Endothelial cell of umbilical vein (primary cell): ENCODE measurements at regions of chr22 and their contacts with region 1.

Region 1: DNA sequence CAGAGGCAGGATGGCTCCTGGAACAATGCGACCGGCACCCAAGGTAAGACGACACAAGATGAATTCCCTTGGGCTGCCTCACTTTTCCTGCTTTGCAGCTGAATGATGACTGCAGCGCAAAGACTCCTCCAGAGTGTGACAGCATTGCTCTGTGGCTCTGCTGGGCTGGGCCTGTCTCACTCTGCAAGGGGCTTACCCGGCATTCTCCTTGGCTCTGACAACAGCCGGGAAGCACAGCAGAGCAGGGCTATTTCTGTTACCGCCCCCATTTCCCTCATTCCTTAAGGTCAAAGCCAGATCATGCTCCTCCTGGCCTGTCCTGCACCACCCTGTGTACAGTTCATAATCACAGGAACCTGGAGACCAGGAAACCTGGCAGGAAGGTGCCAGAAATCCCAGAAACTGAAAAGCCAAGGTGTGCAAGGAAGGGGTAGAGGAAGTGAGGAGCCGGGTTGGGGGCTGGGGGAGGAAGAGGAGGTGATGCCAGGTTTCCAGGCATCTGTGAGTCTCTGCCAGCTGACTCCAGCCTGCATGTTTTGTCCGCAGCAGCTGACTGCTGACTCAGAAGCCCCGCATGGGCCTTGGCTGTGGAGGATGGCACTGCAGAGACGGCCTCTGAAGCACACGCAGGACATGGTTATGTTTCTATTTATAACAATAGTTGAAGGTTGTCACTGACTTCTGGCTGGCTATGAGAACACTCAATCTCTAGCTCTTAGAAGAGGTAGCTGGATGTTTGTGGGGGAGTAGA is 113.6 kb downstream of the MICAL3 start:
- DNase-seq: peak; percentile 94
- H3K4me3 ChIP-seq: no peak overlapping the region
- H3K27ac ChIP-seq: peak overlapping the region; percentile 69
- H3K4me1 ChIP-seq: peaks cover 20% of the 10 kb centered on the region
- H3K27me3 ChIP-seq: no peaks in the 10 kb centered on the region
- CTCF ChIP-seq: peak; percentile 13 to 40
- POLR2A ChIP-seq: no peak

Region 2: DNA sequence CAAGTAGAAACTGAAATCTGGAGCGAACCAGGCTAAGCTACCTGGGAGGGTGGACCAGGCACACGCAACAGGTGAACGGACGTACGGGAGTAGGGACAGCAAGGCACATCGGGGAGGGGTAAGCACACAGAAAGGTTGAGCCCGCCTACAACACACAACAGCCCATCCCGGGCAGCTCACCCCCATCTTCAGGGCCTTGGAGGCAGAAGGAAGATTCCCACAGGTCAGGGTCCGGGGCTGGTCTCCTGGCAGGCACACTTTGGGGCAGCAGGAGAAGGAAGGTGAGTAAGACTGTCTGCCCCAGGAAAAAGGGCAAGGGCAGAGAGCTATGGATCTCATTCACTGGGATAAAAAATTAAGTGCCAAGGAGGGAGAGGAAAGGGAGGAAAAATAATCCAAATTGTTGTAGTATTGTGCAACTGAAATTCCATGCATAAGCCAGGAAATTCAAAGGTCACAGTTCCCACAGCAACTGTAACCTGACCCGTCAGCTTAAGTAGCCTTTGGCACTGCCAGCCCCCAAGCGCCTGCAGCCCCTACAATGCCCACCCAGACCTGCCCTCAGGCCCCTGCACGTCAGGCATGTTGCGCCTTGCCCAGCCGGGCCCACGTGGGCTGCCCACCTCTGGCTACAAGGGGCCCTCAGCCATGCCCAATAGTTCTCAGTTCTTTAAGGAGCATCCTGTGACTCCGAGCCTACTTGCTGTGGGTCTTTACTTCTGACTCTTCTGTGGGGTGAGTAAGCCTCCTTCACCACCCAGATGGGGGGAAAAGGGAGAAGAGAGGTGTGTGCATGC is 61.8 kb after region 1 on chr22:
- CTCF ChIA-PET with region 1: interaction called, 5 read pairs
- POLR2A ChIA-PET with region 1: no interaction called
- dilution Hi-C with region 1: no loop called
- intact Hi-C with region 1: loop called (anchors 1 kb)
- DNase-seq: peak; percentile 63
- H3K4me3 ChIP-seq: no peak overlapping the region
- H3K27ac ChIP-seq: peak overlapping the region; percentile 73
- H3K4me1 ChIP-seq: peaks cover 31% of the 10 kb centered on the region
- H3K27me3 ChIP-seq: no peaks in the 10 kb centered on the region
- CTCF ChIP-seq: no peak
- POLR2A ChIP-seq: no peak

Region 3: DNA sequence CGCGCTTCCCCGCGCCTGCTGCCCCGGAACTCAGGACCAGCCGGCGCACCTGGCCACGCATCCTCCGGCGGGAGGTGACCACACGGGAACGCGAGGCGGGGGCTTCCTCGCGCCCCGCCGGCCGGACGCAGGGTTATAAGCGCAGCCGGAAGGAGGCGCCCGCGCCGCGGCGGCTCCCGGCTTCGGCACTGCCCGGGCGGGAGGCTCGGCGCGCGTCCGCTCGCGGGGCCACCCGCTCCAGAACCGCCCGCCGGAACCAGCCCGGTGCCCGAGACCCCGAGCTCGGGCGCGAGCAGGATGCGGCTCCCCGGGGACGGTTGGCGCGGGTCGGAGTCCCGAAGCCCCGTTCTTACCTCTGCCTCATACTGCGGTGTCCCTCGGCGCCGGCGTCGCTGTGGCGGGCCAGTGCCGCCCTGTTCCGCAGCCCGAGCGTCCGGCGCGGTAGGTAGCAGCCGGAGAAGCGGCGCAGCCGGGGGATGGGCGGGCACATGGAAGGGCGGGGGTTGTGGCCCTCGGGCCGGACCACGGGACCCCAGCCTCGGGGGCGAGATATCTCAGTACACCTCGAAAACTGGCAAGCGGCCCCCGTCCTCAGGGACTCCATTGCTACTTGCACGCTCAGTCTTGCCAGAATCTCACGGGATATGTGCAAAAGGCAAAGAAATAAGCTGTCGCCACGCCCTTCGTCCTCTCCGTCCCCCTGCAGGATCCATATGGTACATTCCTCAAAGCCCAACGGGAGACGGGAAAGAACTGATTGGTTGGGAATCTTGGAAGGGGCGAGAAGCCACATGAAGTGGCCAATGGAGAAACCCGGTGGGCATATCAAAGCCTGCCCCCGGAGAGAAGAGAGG is 90.5 kb after region 1 on chr22:
- CTCF ChIA-PET with region 1: interaction called, 5 read pairs
- POLR2A ChIA-PET with region 1: no interaction called
- dilution Hi-C with region 1: no loop called
- intact Hi-C with region 1: loop called (anchors 1 kb)
- DNase-seq: peak; percentile 96
- H3K4me3 ChIP-seq: peak overlapping the region; percentile 45 to 86 (median 82)
- H3K27ac ChIP-seq: peak overlapping the region; percentile 64
- H3K4me1 ChIP-seq: peaks cover 5% of the 10 kb centered on the region
- H3K27me3 ChIP-seq: no peaks in the 10 kb centered on the region
- CTCF ChIP-seq: peak; percentile 31 to 41
- POLR2A ChIP-seq: peak; percentile 89

Region 4: GRCh38 chr22:18133452-18133851 is 222.7 kb after region 1 on chr22:
- CTCF ChIA-PET with region 1: no interaction called
- POLR2A ChIA-PET with region 1: no interaction called
- dilution Hi-C with region 1: no loop called
- intact Hi-C with region 1: no loop called
- DNase-seq: no peak
- H3K4me3 ChIP-seq: no peak overlapping the region
- H3K27ac ChIP-seq: no peak overlapping the region
- H3K4me1 ChIP-seq: peaks cover 1% of the 10 kb centered on the region
- H3K27me3 ChIP-seq: no peaks in the 10 kb centered on the region
- CTCF ChIP-seq: no peak
- POLR2A ChIP-seq: no peak